Vagina (tissue), 2 donors: ENCODE measurements at regions of chr14 and their contacts with region 1.

Region 1: DNA sequence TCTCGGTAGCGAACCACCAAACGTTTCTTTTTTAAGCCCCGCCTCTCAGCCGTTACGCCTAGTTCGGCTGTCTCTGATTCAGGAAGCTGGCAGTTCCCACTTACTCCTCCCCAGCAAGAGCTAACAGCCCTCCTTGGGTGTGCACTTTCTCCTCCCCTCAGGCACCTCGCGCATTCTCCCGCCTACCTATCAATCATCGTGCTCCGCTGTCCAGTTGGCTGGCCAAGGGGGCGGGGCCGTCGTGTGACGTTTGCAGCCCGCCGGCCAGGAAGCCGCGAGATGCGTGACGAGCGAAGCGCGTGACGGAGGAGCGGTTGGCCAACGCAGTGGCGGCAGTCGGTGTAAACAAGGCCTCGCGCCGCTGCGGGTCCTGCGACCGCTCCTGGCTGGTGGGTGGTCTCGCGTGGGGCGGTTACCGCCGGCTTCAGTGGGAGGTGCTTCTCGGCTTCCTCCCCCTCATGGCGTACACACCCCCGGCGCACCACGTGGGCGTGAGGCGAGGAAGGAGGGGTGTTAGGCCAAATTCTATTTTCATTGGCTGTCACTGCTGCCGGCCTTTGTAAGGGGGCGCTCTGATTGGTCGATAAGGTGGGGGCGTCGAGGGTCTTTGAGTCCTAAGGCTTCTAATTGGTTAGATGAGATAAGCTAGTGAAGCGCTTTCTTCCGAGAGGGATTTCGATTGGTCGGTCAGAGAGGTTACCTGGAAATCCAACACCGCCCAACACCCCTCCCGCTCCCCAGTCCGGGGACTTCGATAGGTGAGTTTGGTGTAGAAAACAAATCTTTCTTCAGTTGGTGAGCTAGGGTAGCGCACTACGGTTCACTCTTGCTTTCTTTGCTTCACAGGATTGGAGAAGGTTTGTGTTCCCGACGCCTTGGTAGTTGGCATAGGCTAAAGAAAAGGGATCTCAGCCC is at the starts of genes DCAF11 and NRL:
- DNase-seq: peak; percentile 99 to 100
- H3K4me3 ChIP-seq: peak within 1 kb of the TSS; percentile 84 to 86
- H3K27ac ChIP-seq: peak within 1 kb of the TSS; percentile 98
- H3K4me1 ChIP-seq: peaks cover 26% of the 10 kb centered on the region
- H3K27me3 ChIP-seq: no peaks in the 10 kb centered on the region
- CTCF ChIP-seq: no peak
- POLR2A ChIP-seq: no peak
- total RNA-seq, gene DCAF11: 75.6 TPM
- total RNA-seq, gene NRL: 1.2 TPM

Region 2: DNA sequence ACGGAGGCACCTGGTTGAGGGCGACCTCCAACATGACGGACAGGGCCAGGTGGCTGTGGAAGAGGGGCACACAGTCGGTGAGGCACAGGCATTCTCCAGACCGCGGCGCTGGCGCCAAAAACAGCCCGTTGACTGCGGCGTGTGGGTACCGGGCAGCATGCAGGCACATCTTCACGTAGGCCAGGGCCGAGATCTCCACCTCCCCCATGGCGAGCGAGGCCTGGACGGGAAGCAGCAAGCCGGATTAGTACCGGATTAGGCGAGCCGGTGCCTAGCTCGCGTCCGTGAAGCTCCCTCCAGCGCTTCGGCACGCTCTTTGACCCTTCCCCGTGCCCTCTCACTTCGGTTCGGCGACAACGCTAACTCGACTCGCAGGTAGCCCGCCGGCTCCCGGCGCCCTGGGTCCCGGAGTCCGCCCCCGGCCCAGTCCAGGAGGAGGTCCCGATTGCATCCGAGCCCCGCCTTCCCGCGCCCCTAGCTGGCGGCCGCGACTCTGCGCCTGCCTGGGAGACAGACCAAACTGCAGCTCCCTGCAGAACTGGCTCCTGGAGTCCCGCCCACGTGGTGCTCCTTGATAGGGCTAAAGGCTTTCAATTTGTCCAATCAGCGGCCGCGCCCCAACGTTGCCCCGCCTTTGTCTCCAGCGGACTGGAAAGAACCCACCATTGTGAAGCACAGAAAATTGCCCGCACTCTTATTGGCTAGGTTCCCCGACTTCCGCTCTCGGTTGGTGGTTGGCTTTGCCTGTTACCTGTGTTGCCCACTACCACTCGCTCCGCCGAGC is 26.5 kb after region 1 on chr14 and contains the start of gene EMC9:
- intact Hi-C with region 1: loop called (anchors 2 kb)
- DNase-seq: peak; percentile 99 to 100
- H3K4me3 ChIP-seq: peak within 1 kb of the TSS; percentile 68 to 94
- H3K27ac ChIP-seq: peak within 1 kb of the TSS; percentile 84
- H3K4me1 ChIP-seq: peaks cover 63% of the 10 kb centered on the region
- H3K27me3 ChIP-seq: no peaks in the 10 kb centered on the region
- CTCF ChIP-seq: peak in 1 of 3 experiments; percentile 52
- POLR2A ChIP-seq: peak in 1 of 2 donors; percentile 73
- total RNA-seq, gene EMC9: 23.8 TPM

Region 3: DNA sequence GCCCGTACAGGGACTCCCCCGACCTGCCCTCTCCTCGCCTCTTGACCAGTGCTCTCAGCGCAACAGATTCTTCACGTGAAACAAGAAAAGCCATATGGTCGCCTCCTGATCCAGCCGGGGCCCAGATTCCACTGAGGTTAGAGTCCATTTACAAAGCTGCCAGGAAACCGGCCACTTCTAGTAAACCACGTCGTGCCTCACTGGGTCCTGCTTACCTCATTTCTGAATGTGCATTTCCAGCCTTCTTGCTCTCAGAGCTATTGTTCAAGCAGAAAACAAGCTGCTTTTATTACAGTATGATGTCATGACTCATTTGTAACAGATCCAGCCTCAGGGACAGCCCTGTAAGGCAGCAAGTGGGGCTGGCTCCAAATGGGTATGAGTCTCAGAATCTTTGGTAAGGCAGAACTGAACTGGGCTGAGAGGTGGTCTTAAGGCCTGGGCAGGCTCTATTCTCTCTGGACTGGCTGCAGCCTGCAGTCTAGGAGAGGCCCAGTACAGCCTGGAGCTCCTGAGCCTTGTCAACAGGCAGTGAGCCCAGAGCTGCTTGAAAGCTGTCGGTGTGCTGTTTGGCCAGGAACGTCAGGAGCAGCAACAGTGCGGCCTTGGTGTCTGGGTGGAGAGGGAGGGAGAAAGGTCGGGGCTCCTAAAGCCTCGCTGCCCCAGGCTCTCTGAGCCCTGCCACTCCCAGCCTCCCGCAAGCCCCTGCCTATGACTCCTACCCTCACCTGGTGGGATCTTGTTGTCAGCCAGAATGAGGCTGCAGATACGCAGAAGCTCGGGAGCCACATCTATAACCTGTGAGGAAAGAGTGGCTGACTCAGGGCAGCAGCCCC is 65.4 kb after region 1 on chr14:
- intact Hi-C with region 1: no loop called
- DNase-seq: no peak
- H3K4me3 ChIP-seq: no peak overlapping the region
- H3K27ac ChIP-seq: peak overlapping the region; percentile 86
- H3K4me1 ChIP-seq: peaks cover 14% of the 10 kb centered on the region
- H3K27me3 ChIP-seq: no peaks in the 10 kb centered on the region
- CTCF ChIP-seq: no peak
- POLR2A ChIP-seq: no peak